ENCODE measurements at regions of chr5 and their contacts with region 1.

Region 1: DNA sequence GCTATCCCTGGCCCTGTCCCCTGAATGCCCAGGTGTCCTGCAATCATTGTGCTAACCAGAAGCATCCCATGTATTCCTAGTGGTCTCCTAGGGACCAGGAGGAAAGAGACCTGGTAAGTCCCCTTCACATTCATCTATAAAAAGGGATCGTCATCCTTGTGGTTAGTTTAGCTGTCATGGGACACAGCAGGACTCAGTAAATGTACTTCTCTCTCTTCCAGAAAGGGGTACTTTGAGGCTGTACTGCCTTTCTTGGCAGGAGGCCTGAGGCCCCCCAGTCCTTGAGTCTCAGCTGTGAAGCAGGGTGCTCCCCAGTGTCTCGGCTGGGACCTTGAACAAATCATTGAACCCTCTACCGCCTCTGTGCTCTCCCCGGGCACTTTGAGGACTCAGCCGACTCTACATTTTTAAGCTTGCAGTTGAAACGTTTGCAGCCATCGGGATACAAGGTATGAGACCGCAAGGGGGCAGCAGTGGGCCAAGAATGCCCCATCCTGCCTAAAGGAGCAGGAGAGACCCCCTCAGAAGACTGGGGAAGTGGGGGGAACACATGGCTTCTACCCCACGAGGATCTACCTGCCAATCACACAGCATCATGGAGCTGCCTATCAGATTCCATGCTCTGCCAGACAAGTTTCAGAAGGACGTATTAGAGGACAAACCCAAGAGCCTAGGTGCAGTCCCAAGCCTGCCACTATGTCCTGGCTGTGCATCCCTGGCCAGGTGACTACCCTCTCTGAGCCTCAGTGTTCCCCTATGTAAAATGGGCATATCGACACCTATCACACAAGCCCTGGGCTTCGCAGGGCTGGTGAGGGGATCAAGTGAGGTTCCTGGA is 2.4 kb upstream of the PHYKPL start:
- DNase-seq: no peak
- ATAC-seq: peak; percentile 40
- H3K4me3 ChIP-seq: no peak overlapping the region
- H3K27ac ChIP-seq: no peak overlapping the region
- H3K4me1 ChIP-seq: peaks cover 48% of the 10 kb centered on the region
- H3K27me3 ChIP-seq: no peaks in the 10 kb centered on the region
- CTCF ChIP-seq: peak; percentile 78 to 85 (median 81)
- EP300 ChIP-seq: no peak
- POLR2A ChIP-seq: no peak
- RAD21 ChIP-seq: peak; percentile 76

Region 2: DNA sequence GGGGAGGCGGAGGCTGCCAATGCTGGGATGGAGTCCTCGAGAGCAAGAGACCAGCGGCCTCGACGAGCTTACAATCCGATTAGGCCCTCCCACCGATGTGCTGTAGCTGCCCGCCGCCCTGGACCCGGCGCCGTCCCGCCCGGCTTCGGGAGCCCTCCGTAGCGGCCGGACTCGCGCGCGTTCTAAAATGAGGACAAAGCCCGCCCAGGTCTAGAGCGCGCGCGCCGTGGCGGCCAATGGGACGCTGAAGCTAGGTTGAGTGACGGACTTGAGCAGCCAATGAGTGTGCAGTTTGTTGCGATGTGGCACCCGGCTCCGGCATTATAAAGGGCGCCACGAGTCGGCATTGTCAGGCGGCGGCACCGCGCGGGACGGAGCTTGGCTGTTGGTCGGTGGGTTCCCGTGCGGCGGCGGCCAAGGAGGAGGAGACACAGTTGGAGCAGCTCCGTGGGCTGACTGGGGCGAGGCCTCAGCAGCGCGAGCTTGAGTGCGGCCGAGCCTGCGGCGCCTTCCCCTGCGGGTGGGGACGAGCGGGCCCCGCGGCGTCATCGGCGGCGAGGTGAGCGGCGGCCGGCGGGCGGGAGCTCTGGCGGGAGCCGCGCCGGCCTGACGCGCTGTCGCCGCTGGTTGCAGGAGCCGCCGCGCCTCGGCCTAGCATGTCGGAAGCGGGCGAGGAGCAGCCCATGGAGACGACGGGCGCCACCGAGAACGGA is 30.6 kb before region 1 on chr5 and contains the start of gene HNRNPAB:
- CTCF ChIA-PET with region 1: interaction called, 5 read pairs
- POLR2A ChIA-PET with region 1: interaction called, 11 read pairs
- RAD21 ChIA-PET with region 1: no interaction called
- SMC1A ChIA-PET with region 1: interaction called, 5 read pairs
- in situ Hi-C with region 1: no loop called
- intact Hi-C with region 1: no loop called
- DNase-seq: peak; percentile 77
- ATAC-seq: peak; percentile 89
- H3K4me3 ChIP-seq: peak within 1 kb of the TSS; percentile 97
- H3K27ac ChIP-seq: peak within 1 kb of the TSS; percentile 67
- H3K4me1 ChIP-seq: peaks cover 15% of the 10 kb centered on the region
- H3K27me3 ChIP-seq: no peaks in the 10 kb centered on the region
- CTCF ChIP-seq: no peak
- EP300 ChIP-seq: no peak
- POLR2A ChIP-seq: peak; percentile 100
- RAD21 ChIP-seq: no peak
- polyA plus RNA-seq, gene HNRNPAB: 42.3 to 77.6 TPM

Region 3: GRCh38 chr5:178324481-178325310 is 89.7 kb after region 1 on chr5:
- CTCF ChIA-PET with region 1: no interaction called
- POLR2A ChIA-PET with region 1: no interaction called
- RAD21 ChIA-PET with region 1: no interaction called
- SMC1A ChIA-PET with region 1: no interaction called
- in situ Hi-C with region 1: no loop called
- intact Hi-C with region 1: no loop called
- DNase-seq: no peak
- ATAC-seq: peak; percentile 87
- H3K4me3 ChIP-seq: no peak overlapping the region
- H3K27ac ChIP-seq: peak overlapping the region; percentile 72
- H3K4me1 ChIP-seq: peaks cover 11% of the 10 kb centered on the region
- H3K27me3 ChIP-seq: no peaks in the 10 kb centered on the region
- CTCF ChIP-seq: no peak
- EP300 ChIP-seq: 0 out of 4 replicates have a peak, but pooled peaks of 1 of the 2 experiments have one; percentile 45
- POLR2A ChIP-seq: no peak
- RAD21 ChIP-seq: no peak

Region 4: GRCh38 chr5:178551059-178551458 is 316.1 kb after region 1 on chr5:
- CTCF ChIA-PET with region 1: interaction called, 5 read pairs
- POLR2A ChIA-PET with region 1: no interaction called
- RAD21 ChIA-PET with region 1: no interaction called
- SMC1A ChIA-PET with region 1: interaction called, 4 read pairs
- in situ Hi-C with region 1: no loop called
- intact Hi-C with region 1: loop called (anchors 2 kb)
- DNase-seq: no peak
- ATAC-seq: no peak
- H3K4me3 ChIP-seq: no peak overlapping the region
- H3K27ac ChIP-seq: no peak overlapping the region
- H3K4me1 ChIP-seq: no peaks in the 10 kb centered on the region
- H3K27me3 ChIP-seq: no peaks in the 10 kb centered on the region
- CTCF ChIP-seq: peak in 1 of 3 experiments; percentile 26; a peak in 3 of 6 replicates
- EP300 ChIP-seq: no peak
- POLR2A ChIP-seq: no peak
- RAD21 ChIP-seq: peak; percentile 23; the same call in 1 of the 2 replicates

Measured in GM12878 (cell line).